Transverse colon (tissue), 4 donors: ENCODE measurements at regions of chr3 and their contacts with region 1.

Region 1: DNA sequence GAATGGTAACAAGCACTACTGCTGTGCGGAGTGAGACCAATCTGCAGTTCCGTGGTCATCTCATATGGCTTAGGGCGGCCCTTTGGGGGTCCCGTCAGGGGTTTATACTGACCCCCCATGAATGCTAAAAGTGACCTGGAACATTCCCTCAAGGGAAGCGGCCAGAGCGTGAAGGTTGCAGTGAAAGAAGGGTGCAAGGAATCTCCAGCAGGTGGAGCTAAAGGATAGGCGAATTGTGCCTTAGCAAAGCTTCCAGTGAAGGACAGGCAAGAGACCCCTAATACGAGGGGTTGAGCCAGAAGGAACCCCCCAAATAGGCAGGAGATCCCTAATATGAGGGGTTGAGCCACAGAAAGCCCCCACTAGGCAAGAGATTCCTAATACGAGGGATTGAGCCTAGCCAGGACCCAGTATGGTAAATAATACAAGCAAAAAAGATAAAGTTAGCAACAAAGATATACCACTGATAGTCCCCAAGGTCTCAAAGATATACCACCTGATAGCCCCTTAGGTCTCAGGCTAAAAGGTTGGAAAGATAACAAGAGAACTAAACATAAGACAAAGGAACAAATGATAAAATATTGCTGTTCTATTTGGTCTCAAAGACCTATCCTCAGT is 32.8 kb downstream of the ZNF589 start:
- DNase-seq: peak; percentile 55
- H3K4me3 ChIP-seq: no peak overlapping the region
- H3K27ac ChIP-seq: no peak overlapping the region
- H3K4me1 ChIP-seq: peaks cover 0 to 10% (median 4%) of the 10 kb centered on the region in 4 donors
- H3K27me3 ChIP-seq: no peaks in the 10 kb centered on the region
- CTCF ChIP-seq: peak; percentile 68 to 80 (median 77)
- EP300 ChIP-seq: no peak
- POLR2A ChIP-seq: no peak

Region 2: GRCh38 chr3:48039487-48040190 is 234.1 kb before region 1 on chr3:
- in situ Hi-C with region 1: no loop called
- intact Hi-C with region 1: no loop called
- DNase-seq: no peak
- H3K4me3 ChIP-seq: no peak overlapping the region
- H3K27ac ChIP-seq: peak overlapping the region; percentile 43 to 66 (median 58)
- H3K4me1 ChIP-seq: peaks cover 20 to 46% (median 26%) of the 10 kb centered on the region in 4 donors
- H3K27me3 ChIP-seq: no peaks in the 10 kb centered on the region
- CTCF ChIP-seq: no peak
- EP300 ChIP-seq: no peak
- POLR2A ChIP-seq: no peak

Region 3: DNA sequence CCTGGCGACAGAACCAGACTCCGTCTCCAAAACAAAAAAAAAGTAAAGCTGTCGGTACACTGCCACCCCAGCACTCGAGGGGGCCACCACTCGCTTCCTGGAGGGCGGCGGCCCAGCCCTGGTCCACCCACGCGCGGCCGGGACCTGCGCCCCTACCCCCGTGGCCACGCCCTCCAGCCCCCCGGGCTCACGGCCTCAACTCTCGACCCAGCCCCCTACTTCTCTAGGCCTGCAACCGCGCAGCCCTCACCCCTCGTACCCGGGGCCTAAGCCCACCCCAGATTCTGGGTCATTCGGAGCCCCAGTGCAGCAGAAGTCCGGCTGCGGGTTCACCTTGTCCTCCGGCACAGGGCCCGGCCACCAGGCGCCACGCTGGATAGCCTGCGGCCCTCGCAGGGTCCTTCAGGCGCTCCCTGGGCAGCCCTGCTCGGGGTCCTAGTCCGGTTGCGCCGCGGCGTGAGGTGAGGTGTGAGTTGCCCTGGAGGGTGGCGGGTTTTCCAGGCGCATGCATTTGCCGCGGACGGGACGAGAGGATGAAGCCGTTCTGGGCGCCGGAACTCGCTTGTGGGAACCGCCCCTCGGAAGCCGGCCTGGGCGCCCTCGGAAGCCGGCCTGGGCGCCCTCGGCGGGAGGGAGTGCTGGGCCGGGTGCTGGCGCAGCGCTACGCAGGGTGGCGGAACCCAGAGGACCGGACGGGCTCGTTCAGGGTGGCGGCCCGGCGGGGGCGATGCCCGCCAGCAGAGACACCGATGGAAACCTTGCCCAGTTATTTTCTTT is 27.5 kb after region 1 on chr3:
- in situ Hi-C with region 1: no loop called
- intact Hi-C with region 1: no loop called
- DNase-seq: peak; percentile 95
- H3K4me3 ChIP-seq: peak within 1 kb of the TSS; percentile 84 to 96 (median 92)
- H3K27ac ChIP-seq: peak within 1 kb of the TSS; percentile 97 to 99 (median 99)
- H3K4me1 ChIP-seq: peaks cover 10 to 21% (median 17%) of the 10 kb centered on the region in 4 donors
- H3K27me3 ChIP-seq: no peaks in the 10 kb centered on the region
- CTCF ChIP-seq: peak in 2 of 5 experiments; percentile 17 to 23
- EP300 ChIP-seq: no peak
- POLR2A ChIP-seq: peak; percentile 75

Region 4: GRCh38 chr3:48314542-48314941 is 40.8 kb after region 1 on chr3:
- in situ Hi-C with region 1: no loop called
- intact Hi-C with region 1: no loop called
- DNase-seq: no peak
- H3K4me3 ChIP-seq: no peak overlapping the region
- H3K27ac ChIP-seq: no peak overlapping the region
- H3K4me1 ChIP-seq: no peaks in the 10 kb centered on the region
- H3K27me3 ChIP-seq: no peaks in the 10 kb centered on the region
- CTCF ChIP-seq: no peak
- EP300 ChIP-seq: no peak
- POLR2A ChIP-seq: no peak

Region 5: DNA sequence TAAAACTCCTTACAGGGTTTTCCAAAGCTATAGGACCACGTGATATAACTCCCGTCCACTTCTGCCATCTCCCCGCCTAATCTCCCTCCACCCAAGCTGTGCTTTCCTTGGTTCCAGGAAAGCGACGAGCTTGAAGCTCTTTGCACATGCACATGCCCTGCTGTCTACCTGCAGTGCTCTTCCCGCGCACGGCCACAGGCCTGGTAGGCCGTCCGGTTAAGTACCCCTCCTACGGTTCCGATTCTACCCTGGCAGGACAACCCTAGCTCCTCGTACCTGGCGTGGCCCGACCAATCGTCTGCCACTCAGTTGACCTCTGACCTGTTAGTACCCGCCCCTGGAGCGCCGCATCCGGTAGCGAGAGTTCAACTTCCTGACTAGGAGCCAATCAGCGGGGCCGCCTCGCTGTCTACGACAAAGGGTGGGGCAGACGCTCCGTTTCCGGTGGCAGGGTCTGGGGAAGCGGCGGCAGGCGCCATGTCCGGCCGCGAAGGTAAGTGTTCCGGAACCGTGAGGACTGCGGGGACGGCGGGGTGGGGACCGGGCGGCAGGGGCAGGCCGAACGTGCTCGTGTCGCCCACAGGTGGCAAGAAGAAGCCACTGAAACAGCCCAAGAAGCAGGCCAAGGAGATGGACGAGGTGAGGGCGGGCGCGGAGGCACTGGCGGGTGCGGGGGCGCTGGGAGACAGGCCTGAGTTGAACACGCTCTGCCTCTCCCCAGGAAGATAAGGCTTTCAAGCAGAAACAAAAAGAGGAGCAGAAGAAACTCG is 166.3 kb after region 1 on chr3 and contains the starts of genes CCDC51 and TMA7:
- in situ Hi-C with region 1: loop called in 2 of 4 experiments (anchors 5 to 10 kb)
- intact Hi-C with region 1: loop called (anchors 10 kb)
- DNase-seq: peak; percentile 99
- H3K4me3 ChIP-seq: peak within 1 kb of the TSS; percentile 81 to 98 (median 92)
- H3K27ac ChIP-seq: peak within 1 kb of the TSS; percentile 93 to 99 (median 96)
- H3K4me1 ChIP-seq: peaks cover 18 to 33% (median 22%) of the 10 kb centered on the region in 4 donors
- H3K27me3 ChIP-seq: no peaks in the 10 kb centered on the region
- CTCF ChIP-seq: no peak
- EP300 ChIP-seq: no peak
- POLR2A ChIP-seq: peak; percentile 99
- total RNA-seq, gene CCDC51: 2.8 to 14.1 (median 8.2) TPM
- total RNA-seq, gene TMA7: 115 to 279 (median 192) TPM

Region 6: GRCh38 chr3:49313896-49314688 is 1040.4 kb after region 1 on chr3:
- in situ Hi-C with region 1: no loop called
- intact Hi-C with region 1: loop called (anchors 5 kb)
- DNase-seq: no peak
- H3K4me3 ChIP-seq: no peak overlapping the region
- H3K27ac ChIP-seq: no peak overlapping the region
- H3K4me1 ChIP-seq: no peaks in the 10 kb centered on the region
- H3K27me3 ChIP-seq: no peaks in the 10 kb centered on the region
- CTCF ChIP-seq: no peak
- EP300 ChIP-seq: no peak
- POLR2A ChIP-seq: no peak